Colonic mucosa (tissue), 4 donors: ENCODE measurements at regions of chr10 and their contacts with region 1.

Region 1: DNA sequence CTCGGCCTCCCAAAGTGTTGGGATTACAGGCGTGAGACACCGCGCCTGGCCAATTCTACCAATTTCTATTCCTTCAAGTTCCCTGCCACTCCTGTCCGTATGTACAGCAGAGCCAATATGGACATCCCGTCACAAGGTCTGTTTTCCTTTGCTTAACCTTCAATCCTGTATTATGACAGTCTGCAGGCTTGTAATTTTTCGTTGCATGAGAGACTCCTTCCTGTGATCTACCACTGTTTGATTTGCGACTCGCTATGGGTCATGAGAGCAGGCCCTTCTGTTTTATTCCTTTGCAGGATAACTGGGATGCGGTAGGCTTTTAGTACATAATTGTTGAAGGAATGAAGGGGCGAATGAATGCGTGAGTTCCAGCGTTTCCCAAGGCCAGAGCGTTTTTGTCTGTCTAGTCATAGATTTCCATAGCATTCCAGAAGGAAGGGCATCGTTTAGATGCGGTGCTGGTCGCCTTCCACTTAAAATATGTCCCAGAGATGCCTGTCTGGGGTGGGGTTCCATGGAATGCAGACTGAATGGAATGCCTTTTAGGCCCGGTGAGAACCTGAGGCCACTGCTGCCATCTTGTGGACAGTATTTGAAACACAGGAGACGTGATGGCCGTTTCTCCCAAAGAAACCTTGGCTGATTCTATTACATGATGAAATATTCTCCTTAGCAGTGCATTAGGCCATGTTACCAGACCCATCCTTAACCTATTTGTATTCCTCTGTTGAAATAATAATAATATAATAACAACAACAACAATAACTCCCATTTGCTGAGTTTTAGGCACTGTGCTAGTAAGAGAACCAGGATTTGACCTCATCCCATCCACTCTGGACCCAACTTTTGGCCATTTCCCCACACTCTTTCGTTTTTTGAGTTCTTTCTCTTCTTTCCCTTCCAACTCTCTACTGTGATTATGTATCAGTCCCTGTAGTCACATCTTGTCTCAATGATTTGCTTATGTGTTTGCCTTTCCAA is 193.2 kb downstream of the MYOF start:
- DNase-seq: peak; percentile 77
- H3K4me3 ChIP-seq: no peak overlapping the region
- H3K27ac ChIP-seq: no peak overlapping the region
- H3K4me1 ChIP-seq: no peaks in the 10 kb centered on the region
- H3K27me3 ChIP-seq: no peaks in the 10 kb centered on the region
- CTCF ChIP-seq: peak; percentile 81

Region 2: DNA sequence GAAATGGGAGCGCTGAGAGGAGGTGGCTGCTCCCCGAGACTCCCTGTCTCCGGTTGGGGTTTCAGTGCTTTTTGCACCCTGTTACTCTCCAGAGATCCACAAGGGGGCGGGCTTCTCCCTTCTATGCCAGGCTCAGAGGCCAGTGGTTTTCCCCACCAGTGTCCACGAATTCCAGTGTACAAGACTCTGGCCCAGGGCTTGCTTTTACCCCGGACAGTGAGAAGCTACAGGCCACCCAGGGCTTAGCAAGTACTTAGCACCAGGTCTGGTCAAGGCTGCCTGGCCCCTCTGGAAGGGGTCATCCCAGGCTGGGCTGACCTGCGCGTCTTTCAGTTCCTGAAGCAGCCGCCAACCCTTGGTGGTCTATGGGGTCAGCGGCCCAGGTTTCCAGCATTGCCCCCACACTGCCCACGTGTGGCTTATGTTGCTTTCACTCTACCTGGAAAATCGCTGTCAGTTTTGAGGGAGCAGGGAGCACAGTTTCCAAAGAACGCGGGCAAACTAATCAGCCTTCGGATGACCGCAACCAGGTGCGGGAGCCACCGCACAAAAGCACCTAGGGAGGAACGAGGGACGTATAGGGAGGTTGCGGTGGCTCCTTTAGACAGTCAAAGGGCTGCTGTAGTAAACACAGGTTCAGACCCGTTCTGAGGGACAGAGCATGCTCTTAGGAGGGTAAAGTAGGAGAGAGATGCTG is 208.4 kb before region 1 on chr10:
- intact Hi-C with region 1: loop called (anchors 1 kb)
- DNase-seq: peak; percentile 49
- H3K4me3 ChIP-seq: no peak overlapping the region
- H3K27ac ChIP-seq: no peak overlapping the region
- H3K4me1 ChIP-seq: no peaks in the 10 kb centered on the region
- H3K27me3 ChIP-seq: peaks cover 13% of the 10 kb centered on the region
- CTCF ChIP-seq: peak; percentile 67

Region 3: GRCh38 chr10:93115661-93116383 is 173.1 kb before region 1 on chr10:
- intact Hi-C with region 1: loop called (anchors 2 kb)
- DNase-seq: peak; percentile 86
- H3K4me3 ChIP-seq: no peak overlapping the region
- H3K27ac ChIP-seq: no peak overlapping the region
- H3K4me1 ChIP-seq: no peaks in the 10 kb centered on the region
- H3K27me3 ChIP-seq: no peaks in the 10 kb centered on the region
- CTCF ChIP-seq: peak; percentile 34